ENCODE measurements at regions of chr2 and their contacts with region 1.

Region 1: GRCh38 chr2:54522624-54523281 is 66.6 kb downstream of the SPTBN1 start:
- DNase-seq: peak; percentile 75
- H3K4me3 ChIP-seq: no peak overlapping the region
- H3K27ac ChIP-seq: no peak overlapping the region
- H3K4me1 ChIP-seq: peaks cover 22% of the 10 kb centered on the region
- H3K27me3 ChIP-seq: no peaks in the 10 kb centered on the region
- CTCF ChIP-seq: peak; percentile 70

Region 2: DNA sequence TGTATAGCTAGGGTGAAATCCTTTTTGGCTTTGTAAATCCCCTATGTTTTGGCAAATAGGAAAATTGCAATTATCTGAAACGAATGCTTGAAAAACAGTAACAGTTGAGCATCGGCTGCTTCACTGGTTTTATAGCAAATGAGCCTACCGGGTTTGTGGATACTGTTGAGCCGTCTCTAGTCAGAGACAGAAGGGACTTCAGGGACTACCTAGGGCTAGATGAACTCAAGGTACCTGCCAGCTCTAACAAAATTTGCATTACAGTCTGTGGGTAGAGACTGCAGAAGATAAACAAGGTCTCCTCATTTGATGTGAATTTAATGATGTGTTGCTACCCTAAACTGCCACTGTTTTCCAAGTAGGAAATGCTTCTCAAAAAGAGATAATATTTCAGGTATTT is 301.8 kb after region 1 on chr2:
- CTCF ChIA-PET with region 1: no interaction called
- POLR2A ChIA-PET with region 1: no interaction called
- intact Hi-C with region 1: loop called (anchors 10 kb)
- DNase-seq: no peak
- H3K4me3 ChIP-seq: no peak overlapping the region
- H3K27ac ChIP-seq: no peak overlapping the region
- H3K4me1 ChIP-seq: no peaks in the 10 kb centered on the region
- H3K27me3 ChIP-seq: no peaks in the 10 kb centered on the region
- CTCF ChIP-seq: no peak

Region 3: GRCh38 chr2:54909001-54909400 is 386.2 kb after region 1 on chr2:
- CTCF ChIA-PET with region 1: no interaction called
- POLR2A ChIA-PET with region 1: no interaction called
- intact Hi-C with region 1: no loop called
- DNase-seq: no peak
- H3K4me3 ChIP-seq: no peak overlapping the region
- H3K27ac ChIP-seq: no peak overlapping the region
- H3K4me1 ChIP-seq: peaks cover 6% of the 10 kb centered on the region
- H3K27me3 ChIP-seq: no peaks in the 10 kb centered on the region
- CTCF ChIP-seq: no peak

Region 4: GRCh38 chr2:55175254-55176025 is 652.7 kb after region 1 on chr2:
- CTCF ChIA-PET with region 1: interaction called, 4 read pairs
- POLR2A ChIA-PET with region 1: no interaction called
- intact Hi-C with region 1: loop called (anchors 10 kb)
- DNase-seq: peak; percentile 75
- H3K4me3 ChIP-seq: no peak overlapping the region
- H3K27ac ChIP-seq: no peak overlapping the region
- H3K4me1 ChIP-seq: peaks cover 16% of the 10 kb centered on the region
- H3K27me3 ChIP-seq: no peaks in the 10 kb centered on the region
- CTCF ChIP-seq: peak; percentile 75

Measured in A673 (cell line).